HEK293 (cell line): ENCODE measurements at regions of chr2 and their contacts with region 1.

Region 1: DNA sequence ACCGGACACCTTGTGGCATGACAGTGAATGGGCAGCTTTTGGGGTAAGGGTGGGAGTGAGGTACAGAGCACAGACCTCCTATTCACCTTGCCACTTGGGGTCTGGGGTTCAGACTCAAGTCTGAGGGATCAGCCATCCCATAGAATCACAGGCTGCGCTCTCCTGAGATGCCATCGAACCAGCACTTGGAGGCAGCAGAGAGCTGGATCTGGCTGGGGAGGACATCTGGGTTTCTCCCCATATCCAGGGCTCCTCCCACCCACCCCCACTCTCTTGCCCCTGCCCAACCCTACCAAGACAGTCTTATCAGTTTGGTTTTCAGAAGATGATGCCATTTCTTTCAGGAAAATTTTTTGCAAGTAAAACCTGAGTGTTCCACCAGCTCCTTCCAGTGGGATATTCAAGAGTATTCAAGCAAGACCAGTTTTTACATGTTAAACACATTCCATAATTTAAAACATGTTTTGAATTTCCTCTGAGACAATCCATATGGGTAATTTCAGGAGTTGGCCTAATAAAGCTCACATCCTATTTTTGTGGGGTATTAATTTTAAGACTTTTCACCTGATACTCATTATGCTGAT is 29.2 kb upstream of the TEX44 start:
- H3K4me3 ChIP-seq: no peak overlapping the region
- H3K27ac ChIP-seq: no peak overlapping the region
- H3K4me1 ChIP-seq: no peaks in the 10 kb centered on the region
- CTCF ChIP-seq: peak; percentile 39; the same call in 1 of the 2 replicates

Region 2: GRCh38 chr2:231573698-231574421 is 10.4 kb after region 1 on chr2:
- CTCF ChIA-PET with region 1: interaction called, 10 read pairs
- POLR2A ChIA-PET with region 1: no interaction called
- H3K4me3 ChIP-seq: no peak overlapping the region
- H3K27ac ChIP-seq: no peak overlapping the region
- H3K4me1 ChIP-seq: no peaks in the 10 kb centered on the region
- CTCF ChIP-seq: no peak

Region 3: GRCh38 chr2:231590619-231591018 is 27.1 kb after region 1 on chr2:
- CTCF ChIA-PET with region 1: interaction called, 11 read pairs
- POLR2A ChIA-PET with region 1: no interaction called
- H3K4me3 ChIP-seq: no peak overlapping the region
- H3K27ac ChIP-seq: no peak overlapping the region
- H3K4me1 ChIP-seq: no peaks in the 10 kb centered on the region
- CTCF ChIP-seq: no peak

Region 4: DNA sequence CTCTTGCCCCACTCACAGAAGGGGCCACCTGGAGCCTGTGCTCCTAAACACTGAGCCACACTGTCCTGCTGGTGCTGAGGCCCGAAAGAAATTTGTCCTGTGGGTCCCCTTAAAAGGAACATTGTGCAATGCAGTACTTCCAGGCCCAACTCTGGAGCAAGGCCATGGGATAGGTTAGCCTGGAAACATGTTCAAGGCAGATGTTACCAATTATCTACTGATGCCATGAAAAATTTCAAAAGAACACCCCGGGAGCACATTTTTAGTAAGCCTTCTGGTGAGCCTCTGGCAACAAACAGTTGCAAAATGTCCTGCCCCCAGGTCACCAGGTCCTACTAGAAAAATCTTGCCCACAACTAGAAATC is 132.5 kb after region 1 on chr2:
- CTCF ChIA-PET with region 1: no interaction called
- POLR2A ChIA-PET with region 1: no interaction called
- H3K4me3 ChIP-seq: no peak overlapping the region
- H3K27ac ChIP-seq: no peak overlapping the region
- H3K4me1 ChIP-seq: no peaks in the 10 kb centered on the region
- CTCF ChIP-seq: no peak